Adrenal gland (tissue), 19 donors: ENCODE measurements at regions of chr7 and their contacts with region 1.

Region 1: GRCh38 chr7:31122649-31123058 is 70.5 kb downstream of the ADCYAP1R1 start:
- DNase-seq: peak; percentile 74 to 90 (median 79)
- H3K4me3 ChIP-seq: no peak overlapping the region
- H3K27ac ChIP-seq: no peak overlapping the region
- H3K4me1 ChIP-seq: peaks cover 0 to 13% of the 10 kb centered on the region in 2 donors
- H3K27me3 ChIP-seq: no peaks in the 10 kb centered on the region
- CTCF ChIP-seq: peak; percentile 66 to 91 (median 88)
- POLR2A ChIP-seq: no peak

Region 2: DNA sequence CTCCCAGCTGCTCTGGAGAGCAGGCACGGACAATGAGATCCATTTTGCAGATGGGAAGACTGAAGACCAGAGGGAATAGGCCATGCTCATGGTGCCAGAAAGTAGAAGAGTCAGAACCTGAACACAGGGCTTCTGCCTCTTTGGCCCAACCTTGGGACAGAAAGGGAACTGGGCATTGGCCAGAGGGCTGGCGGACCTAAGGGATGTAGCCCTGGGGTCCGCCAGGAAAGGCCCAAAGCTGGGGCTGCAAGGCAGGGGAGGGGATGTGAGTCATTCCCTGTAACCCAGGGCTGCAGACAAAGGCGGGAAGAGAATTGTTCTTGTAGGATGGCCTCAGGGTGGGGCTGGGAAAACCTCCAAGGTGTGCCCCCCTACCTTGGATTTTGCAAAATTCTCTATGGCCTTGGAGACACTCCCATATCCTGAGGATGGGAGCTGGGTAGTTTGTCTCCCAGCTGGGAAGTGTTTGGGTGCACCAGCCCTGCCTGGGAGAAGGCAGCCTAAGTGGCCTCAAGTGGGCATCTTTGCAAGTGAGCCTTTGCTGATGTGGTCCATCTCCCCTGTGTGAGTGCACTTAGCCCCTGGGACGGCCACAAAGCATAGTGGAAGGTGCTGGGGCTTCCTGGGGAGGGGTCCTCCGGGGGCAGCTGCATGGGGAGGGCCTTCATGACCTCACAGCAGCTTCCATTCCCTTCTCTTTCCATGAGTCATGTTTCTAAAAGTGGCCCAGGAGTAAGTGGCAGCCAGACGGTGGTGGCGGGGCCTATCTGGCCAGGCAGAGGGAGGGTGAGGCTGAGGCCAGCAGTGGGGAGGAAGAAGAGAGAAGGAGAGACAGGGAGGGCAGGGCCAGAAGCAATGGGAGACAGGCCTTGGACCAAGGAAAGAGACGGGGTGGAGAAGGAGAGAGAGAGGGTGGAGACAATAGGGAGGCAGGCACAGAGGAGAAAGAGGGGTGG is 201.8 kb before region 1 on chr7:
- intact Hi-C with region 1: no loop called
- DNase-seq: peak in 6 of 7 donors; percentile 20 to 61 (median 50)
- H3K4me3 ChIP-seq: no peak overlapping the region
- H3K27ac ChIP-seq: peak overlapping the region in 2 of 5 donors; percentile 41 to 52
- H3K4me1 ChIP-seq: peaks cover 0 to 17% of the 10 kb centered on the region in 2 donors
- H3K27me3 ChIP-seq: no peaks in the 10 kb centered on the region
- CTCF ChIP-seq: peak in 1 of 6 experiments; percentile 4
- POLR2A ChIP-seq: no peak

Region 3: GRCh38 chr7:30983042-30983913 is 139.4 kb before region 1 on chr7:
- intact Hi-C with region 1: loop called (anchors 2 to 5 kb)
- DNase-seq: peak; percentile 66 to 95 (median 87)
- H3K4me3 ChIP-seq: no peak overlapping the region
- H3K27ac ChIP-seq: no peak overlapping the region
- H3K4me1 ChIP-seq: peaks cover 4% of the 10 kb centered on the region in 2 donors
- H3K27me3 ChIP-seq: no peaks in the 10 kb centered on the region
- CTCF ChIP-seq: peak; percentile 78 to 97 (median 91)
- POLR2A ChIP-seq: no peak